AG04450 (cell line): ENCODE measurements at regions of chr17 and their contacts with region 1.

Region 1: DNA sequence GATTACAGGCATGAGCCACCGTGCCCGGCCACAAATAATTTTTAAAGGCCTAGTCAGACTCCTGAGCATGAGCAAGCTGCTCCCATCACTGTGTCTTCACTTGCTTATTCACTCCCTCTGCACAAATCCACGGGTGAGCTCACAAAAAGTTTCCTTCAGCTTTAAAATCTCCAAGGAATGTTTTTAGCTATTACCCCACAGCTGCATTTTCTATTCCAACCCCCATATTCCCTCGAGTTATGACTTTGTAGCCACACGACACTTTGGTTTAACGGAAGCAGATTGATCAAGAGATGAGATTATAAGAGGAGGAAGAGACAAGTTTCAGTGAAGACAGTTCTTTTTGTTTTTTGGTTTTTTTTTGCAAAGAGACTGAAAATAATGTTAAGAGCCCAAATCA is 49.1 kb upstream of the SLC25A19 start:
- DNase-seq: peak; percentile 7
- H3K4me3 ChIP-seq: no peak overlapping the region
- H3K27ac ChIP-seq: peak overlapping the region; percentile 57
- H3K27me3 ChIP-seq: no peaks in the 10 kb centered on the region
- CTCF ChIP-seq: no peak

Region 2: GRCh38 chr17:75181110-75181509 is 157.2 kb before region 1 on chr17:
- CTCF ChIA-PET with region 1: no interaction called
- POLR2A ChIA-PET with region 1: no interaction called
- DNase-seq: no peak
- H3K4me3 ChIP-seq: peak overlapping the region; percentile 89
- H3K27ac ChIP-seq: no peak overlapping the region
- H3K27me3 ChIP-seq: no peaks in the 10 kb centered on the region
- CTCF ChIP-seq: no peak

Region 3: GRCh38 chr17:75313941-75314551 is 24.3 kb before region 1 on chr17:
- CTCF ChIA-PET with region 1: no interaction called
- POLR2A ChIA-PET with region 1: interaction called, 10 read pairs
- DNase-seq: no peak
- H3K4me3 ChIP-seq: no peak overlapping the region
- H3K27ac ChIP-seq: no peak overlapping the region
- H3K27me3 ChIP-seq: no peaks in the 10 kb centered on the region
- CTCF ChIP-seq: no peak